ENCODE measurements at regions of chr11 and their contacts with region 1.

Region 1: GRCh38 chr11:93756748-93757147 is 15.3 kb downstream of the C11orf54 start:
- DNase-seq: no peak
- ATAC-seq: no peak
- H3K4me3 ChIP-seq: no peak overlapping the region
- H3K27ac ChIP-seq: no peak overlapping the region
- H3K4me1 ChIP-seq: no peaks in the 10 kb centered on the region
- H3K27me3 ChIP-seq: no peaks in the 10 kb centered on the region
- CTCF ChIP-seq: no peak

Region 2: GRCh38 chr11:95432714-95433503 is 1676.2 kb after region 1 on chr11:
- intact Hi-C with region 1: loop called in 1 of 10 experiments (anchors 5 kb)
- DNase-seq: no peak
- ATAC-seq: peak in 1 of 8 donors; percentile 35
- H3K4me3 ChIP-seq: no peak overlapping the region
- H3K27ac ChIP-seq: no peak overlapping the region
- H3K4me1 ChIP-seq: peaks cover 0 to 16% (median 4%) of the 10 kb centered on the region in 9 donors
- H3K27me3 ChIP-seq: peaks cover 0 to 3% (median 0%) of the 10 kb centered on the region in 7 donors
- CTCF ChIP-seq: no peak

Measured in heart right ventricle (tissue), 16 donors.